ENCODE measurements at regions of chr9 and their contacts with region 1.

Region 1: DNA sequence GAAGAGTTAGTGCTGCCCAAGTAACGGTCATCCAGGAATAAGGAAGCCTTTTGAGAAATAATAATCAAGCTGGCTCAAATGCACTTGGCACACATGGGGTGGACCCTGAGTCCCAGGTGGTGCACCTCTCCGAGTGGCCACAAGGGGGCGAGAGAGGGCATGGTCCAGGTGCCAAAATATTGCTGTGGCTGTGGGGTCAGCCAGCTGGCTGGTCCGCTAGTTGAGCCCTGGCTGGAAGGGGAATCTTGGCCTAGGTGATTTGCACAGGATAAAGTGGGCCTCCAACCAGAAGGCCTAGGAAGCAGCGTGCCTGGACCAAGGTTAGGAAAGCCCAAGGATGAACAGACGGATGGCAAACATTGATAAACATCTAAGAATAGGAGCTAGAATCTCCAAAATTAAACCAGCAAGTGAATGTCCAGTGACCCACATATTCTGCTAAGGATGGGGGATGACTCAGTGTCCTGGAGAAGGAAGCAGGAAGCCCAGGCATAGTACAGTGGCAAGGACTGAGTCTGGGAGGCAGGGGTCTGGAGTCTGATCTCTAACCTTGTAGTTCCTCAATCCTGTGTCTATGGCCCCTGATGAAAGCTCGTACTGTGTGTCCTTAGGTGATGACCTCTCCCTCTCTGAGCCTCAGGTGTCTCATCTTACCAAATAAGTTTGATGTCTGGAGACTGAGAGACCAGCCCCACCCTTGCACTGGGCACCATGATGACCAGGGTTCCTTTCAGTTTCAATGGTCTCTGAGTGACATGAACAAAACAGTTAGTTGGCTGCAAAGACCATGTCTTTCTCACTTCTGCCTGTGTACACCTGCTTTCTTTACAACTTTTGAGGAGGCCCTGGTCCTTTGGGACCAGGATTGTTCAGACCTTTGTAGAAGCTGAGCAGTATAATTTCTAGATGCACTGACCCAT is 19.2 kb upstream of the SHB start:
- DNase-seq: peak; percentile 84
- H3K4me3 ChIP-seq: no peak overlapping the region
- H3K27ac ChIP-seq: peak overlapping the region in 1 of 2 experiments; percentile 7; a peak in 1 of 4 replicates
- H3K4me1 ChIP-seq: peaks cover 0 to 11% of the 10 kb centered on the region in 2 experiments; a peak in 1 of 4 replicates
- H3K27me3 ChIP-seq: no peaks in the 10 kb centered on the region
- CTCF ChIP-seq: peak; percentile 95
- EP300 ChIP-seq: no peak
- RAD21 ChIP-seq: peak; percentile 84

Region 2: DNA sequence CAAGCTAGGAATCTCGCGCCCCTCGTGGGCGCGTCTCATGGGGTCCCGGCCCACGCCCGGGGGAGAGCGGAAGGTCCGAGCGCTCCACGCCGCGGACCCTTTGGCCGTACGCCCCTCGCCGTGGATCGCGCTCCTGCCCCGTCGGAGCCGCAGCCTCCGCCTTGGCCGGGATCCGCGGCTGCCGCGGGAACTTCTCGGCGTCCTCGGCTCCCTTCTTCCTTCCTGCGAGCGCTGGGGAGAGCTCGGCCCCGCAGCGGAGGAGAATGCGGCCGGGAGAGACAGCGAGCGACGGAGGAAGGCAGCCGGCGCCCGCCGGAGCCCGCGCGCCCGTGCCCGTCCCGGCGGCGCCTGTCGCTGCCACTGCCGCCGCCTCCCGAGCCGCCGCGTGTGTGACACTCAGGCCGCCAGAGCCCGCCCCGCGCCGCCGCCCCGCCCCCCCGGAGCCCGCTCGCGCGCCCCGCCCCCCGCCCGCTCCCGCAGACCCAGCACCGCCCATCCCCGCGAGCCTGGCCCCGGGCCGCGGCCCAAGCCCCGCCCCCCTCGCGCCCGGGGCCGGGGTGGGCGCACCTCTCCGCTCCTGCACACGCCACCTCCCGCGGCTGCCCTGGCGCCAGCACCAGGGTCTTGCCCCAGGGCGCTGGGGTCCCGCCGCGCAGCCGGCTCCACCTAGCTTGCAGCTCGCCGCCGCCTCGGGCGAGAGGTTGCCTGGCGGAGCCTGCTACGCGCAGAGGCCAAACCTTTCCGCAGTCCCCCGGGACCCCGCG is 19.2 kb before region 1 on chr9 and contains the start of gene SHB:
- CTCF ChIA-PET with region 1: interaction called, 21 read pairs
- POLR2A ChIA-PET with region 1: no interaction called
- DNase-seq: peak; percentile 95
- H3K4me3 ChIP-seq: peak within 1 kb of the TSS; percentile 76 to 78
- H3K27ac ChIP-seq: peak within 1 kb of the TSS; percentile 79 to 91
- H3K4me1 ChIP-seq: peaks cover 21 to 49% of the 10 kb centered on the region in 2 experiments; a peak in 3 of 4 replicates
- H3K27me3 ChIP-seq: no peaks in the 10 kb centered on the region
- CTCF ChIP-seq: peak; percentile 54
- EP300 ChIP-seq: no peak
- RAD21 ChIP-seq: no peak
- polyA plus RNA-seq, gene SHB: 20.5 and 26.0 TPM in 2 replicates

Region 3: GRCh38 chr9:38141746-38142591 is 53.7 kb after region 1 on chr9:
- CTCF ChIA-PET with region 1: interaction called, 10 read pairs
- POLR2A ChIA-PET with region 1: no interaction called
- DNase-seq: no peak
- H3K4me3 ChIP-seq: peak overlapping the region in 1 of 2 experiments; percentile 11; a peak in 2 of 4 replicates
- H3K27ac ChIP-seq: peak overlapping the region; percentile 45 to 68; a peak in 3 of 4 replicates
- H3K4me1 ChIP-seq: peaks cover 15 to 20% of the 10 kb centered on the region in 2 experiments
- H3K27me3 ChIP-seq: no peaks in the 10 kb centered on the region; the same call in 1 of the 2 replicates
- CTCF ChIP-seq: no peak
- EP300 ChIP-seq: peak in 1 of 2 experiments; percentile 54; a peak in 1 of 4 replicates
- RAD21 ChIP-seq: no peak

Region 4: DNA sequence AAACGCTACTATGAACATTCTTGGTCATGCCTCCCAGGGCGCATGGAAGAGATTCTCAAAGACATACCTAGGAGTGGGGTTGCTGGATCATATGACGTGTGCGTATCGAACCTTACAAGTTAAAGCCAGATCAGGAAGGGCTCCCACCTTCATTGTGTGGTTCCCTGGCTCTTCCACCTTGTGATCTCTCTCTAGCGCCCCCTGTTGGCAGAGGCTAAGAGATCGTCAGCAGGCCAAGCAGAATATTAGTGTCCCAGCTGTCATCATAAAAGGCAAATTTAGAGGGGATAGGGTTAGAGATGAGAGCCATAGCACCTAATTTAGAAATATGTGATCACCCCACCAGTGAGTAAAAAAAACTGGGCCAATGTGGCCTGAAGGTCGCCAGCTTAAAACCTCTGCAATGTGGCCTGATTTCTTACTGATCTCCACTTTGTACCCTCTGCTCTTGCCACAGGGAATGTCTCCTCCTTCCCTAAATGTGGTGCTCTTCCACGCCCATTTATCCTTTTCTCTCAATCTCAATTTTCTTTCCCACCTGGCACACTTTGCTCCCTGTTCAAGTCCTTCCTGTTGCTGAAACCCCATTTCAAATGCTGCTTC is 72.4 kb after region 1 on chr9:
- CTCF ChIA-PET with region 1: interaction called, 43 read pairs
- POLR2A ChIA-PET with region 1: interaction called, 3 read pairs
- DNase-seq: peak; percentile 52
- H3K4me3 ChIP-seq: peak overlapping the region in 1 of 2 experiments; percentile 21; a peak in 1 of 4 replicates
- H3K27ac ChIP-seq: no peak overlapping the region
- H3K4me1 ChIP-seq: peaks cover 0 to 13% of the 10 kb centered on the region in 2 experiments; a peak in 1 of 4 replicates
- H3K27me3 ChIP-seq: no peaks in the 10 kb centered on the region; the same call in 1 of the 2 replicates
- CTCF ChIP-seq: peak; percentile 90
- EP300 ChIP-seq: no peak
- RAD21 ChIP-seq: peak; percentile 66

Region 5: DNA sequence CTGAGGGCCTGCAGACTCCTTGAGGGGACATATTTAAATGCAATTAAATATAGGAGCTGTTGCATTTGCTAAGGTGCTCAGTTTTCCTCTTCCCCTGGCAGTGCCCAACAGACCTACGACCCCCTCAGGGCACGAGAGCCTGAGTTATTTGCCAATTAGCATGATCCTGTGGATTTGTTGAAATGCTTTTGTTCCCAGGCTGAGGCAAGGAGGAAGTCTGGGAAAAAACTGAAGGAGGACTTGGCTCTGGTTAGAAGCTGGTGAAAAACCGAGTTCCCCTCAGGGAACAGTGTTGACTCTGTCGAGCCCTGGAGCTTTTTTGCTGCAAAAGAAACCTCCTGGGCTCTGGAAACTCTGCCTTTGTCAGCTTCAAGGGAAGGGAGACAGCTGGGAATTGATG is 84.3 kb after region 1 on chr9:
- CTCF ChIA-PET with region 1: no interaction called
- POLR2A ChIA-PET with region 1: no interaction called
- DNase-seq: peak; percentile 32
- H3K4me3 ChIP-seq: no peak overlapping the region
- H3K27ac ChIP-seq: peak overlapping the region in 1 of 2 experiments; percentile 11; a peak in 2 of 4 replicates
- H3K4me1 ChIP-seq: peaks cover 0 to 7% of the 10 kb centered on the region in 2 experiments; a peak in 1 of 4 replicates
- H3K27me3 ChIP-seq: no peaks in the 10 kb centered on the region
- CTCF ChIP-seq: no peak
- EP300 ChIP-seq: no peak
- RAD21 ChIP-seq: no peak

Region 6: DNA sequence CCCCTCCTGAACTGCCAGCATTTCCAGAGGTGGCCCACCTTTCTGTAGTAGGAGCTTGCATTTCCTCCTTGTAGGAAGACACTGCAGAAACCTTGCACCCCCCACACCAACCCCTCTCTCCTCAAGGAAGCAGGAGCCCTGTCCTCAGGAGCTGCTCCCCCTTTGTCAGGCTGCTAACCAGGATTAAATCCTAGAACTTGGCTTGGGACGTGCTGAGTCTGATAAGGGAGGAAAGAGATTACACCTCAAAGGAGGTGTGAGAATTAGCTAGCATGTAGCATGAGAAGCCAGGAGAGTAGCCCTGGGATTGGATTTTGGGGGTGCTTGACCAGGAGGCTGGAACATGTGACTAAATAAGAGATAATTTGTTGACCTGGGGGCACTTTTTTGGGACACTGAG is 184.4 kb after region 1 on chr9:
- CTCF ChIA-PET with region 1: no interaction called
- POLR2A ChIA-PET with region 1: no interaction called
- DNase-seq: no peak
- H3K4me3 ChIP-seq: no peak overlapping the region
- H3K27ac ChIP-seq: no peak overlapping the region
- H3K4me1 ChIP-seq: no peaks in the 10 kb centered on the region; a peak in 1 of 4 replicates
- H3K27me3 ChIP-seq: no peaks in the 10 kb centered on the region; the same call in 1 of the 2 replicates
- CTCF ChIP-seq: no peak
- EP300 ChIP-seq: no peak
- RAD21 ChIP-seq: no peak

Region 7: GRCh38 chr9:38346811-38347210 is 258.5 kb after region 1 on chr9:
- CTCF ChIA-PET with region 1: interaction called, 10 read pairs
- POLR2A ChIA-PET with region 1: no interaction called
- DNase-seq: no peak
- H3K4me3 ChIP-seq: no peak overlapping the region
- H3K27ac ChIP-seq: no peak overlapping the region
- H3K4me1 ChIP-seq: peaks cover 0 to 20% of the 10 kb centered on the region in 2 experiments; a peak in 1 of 4 replicates
- H3K27me3 ChIP-seq: no peaks in the 10 kb centered on the region; the same call in 1 of the 2 replicates
- CTCF ChIP-seq: no peak
- EP300 ChIP-seq: no peak
- RAD21 ChIP-seq: no peak

Region 8: DNA sequence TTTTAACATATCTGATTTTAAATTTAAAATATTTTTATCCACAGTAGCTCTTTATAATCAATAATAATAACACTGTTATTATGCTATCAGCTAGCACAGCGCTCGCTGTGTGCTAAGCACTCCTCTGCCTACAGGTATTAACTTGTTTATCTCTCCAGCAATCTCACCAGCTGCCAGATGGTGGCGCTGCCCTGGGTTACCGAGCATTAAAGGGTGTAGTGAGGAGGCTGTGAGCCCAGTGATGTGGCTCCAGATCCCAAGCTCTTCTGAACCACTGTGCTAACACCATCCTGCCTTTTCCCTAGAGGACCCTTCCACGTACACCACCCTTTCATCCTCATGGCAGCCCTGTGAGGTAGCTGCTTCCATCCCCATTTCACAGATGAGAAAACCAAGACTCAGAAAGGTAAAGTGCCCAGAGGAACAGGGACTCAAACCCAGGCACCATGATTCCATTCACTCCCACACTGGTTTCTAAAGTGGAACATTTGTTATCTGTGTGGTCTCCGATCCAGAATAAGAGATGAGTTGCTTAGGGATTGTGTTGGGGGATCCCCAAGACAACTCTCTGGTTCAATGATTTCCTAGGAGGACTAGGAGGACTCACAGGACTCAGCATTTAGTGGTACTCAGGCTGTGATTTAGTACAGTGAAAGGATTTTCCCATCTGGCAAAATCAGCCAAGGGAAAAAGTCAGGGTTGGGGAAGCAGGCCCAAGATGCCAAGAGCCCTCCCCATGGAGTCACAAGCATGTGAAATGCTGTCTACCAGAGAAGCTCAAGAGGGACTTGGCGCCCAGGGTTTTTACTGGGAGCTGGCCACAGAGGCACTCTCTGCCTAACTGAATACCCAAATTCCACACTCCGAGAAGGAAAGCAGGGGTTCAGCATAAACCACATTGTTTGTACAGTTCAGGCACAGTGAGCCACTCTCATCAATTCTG is 329.0 kb after region 1 on chr9:
- CTCF ChIA-PET with region 1: no interaction called
- POLR2A ChIA-PET with region 1: no interaction called
- DNase-seq: peak; percentile 68
- H3K4me3 ChIP-seq: no peak overlapping the region; a peak in 1 of 4 replicates
- H3K27ac ChIP-seq: peak overlapping the region in 1 of 2 experiments; percentile 52; a peak in 2 of 4 replicates
- H3K4me1 ChIP-seq: peaks cover 3 to 57% of the 10 kb centered on the region in 2 experiments; a peak in 1 of 4 replicates
- H3K27me3 ChIP-seq: peaks cover 17% of the 10 kb centered on the region
- CTCF ChIP-seq: peak; percentile 65
- EP300 ChIP-seq: no peak
- RAD21 ChIP-seq: peak; percentile 54

Measured in SK-N-SH (cell line).